AG04449 (cell line): ENCODE measurements at regions of chr17 and their contacts with region 1.

Region 1: DNA sequence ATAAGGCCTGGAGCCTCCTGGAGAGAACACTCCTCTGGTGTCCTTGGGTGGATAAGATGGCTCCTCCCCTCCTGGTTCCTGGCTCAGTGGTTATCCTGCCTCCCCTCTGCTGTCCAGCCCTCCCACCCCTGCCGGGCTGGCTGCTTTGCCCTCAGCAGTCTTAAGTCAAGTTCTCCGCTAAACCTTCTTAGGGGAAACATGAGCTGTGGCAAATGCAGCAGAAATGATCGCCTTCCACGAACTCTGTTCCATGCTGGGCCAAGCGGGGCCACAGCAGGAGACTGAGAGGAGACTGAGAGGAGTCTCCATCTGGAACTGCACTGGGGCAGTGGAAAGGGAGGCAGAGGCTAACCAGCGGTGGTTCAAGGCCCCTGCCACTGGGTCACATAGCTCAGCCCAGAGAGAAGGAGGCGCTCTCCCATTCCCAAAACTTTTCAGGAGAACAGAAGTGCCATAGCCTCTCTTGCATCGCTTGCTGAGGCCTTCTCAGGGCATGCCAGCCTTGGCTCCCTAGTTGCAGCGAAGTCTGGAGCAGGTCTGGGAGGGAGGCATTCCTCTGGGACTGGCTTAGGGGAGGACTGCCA is 26.9 kb downstream of the TNS4 start:
- DNase-seq: no peak
- H3K4me3 ChIP-seq: no peak overlapping the region
- CTCF ChIP-seq: no peak

Region 2: GRCh38 chr17:40399185-40399584 is 75.3 kb before region 1 on chr17:
- CTCF ChIA-PET with region 1: interaction called, 12 read pairs
- POLR2A ChIA-PET with region 1: no interaction called
- DNase-seq: peak; percentile 12
- H3K4me3 ChIP-seq: no peak overlapping the region
- CTCF ChIP-seq: peak; percentile 21

Region 3: GRCh38 chr17:40443583-40444327 is 30.8 kb before region 1 on chr17:
- CTCF ChIA-PET with region 1: interaction called, 85 read pairs
- POLR2A ChIA-PET with region 1: interaction called, 7 read pairs
- DNase-seq: no peak
- H3K4me3 ChIP-seq: peak overlapping the region; percentile 99
- CTCF ChIP-seq: peak; percentile 84

Region 4: GRCh38 chr17:40457964-40458791 is 16.3 kb before region 1 on chr17:
- CTCF ChIA-PET with region 1: interaction called, 85 read pairs
- POLR2A ChIA-PET with region 1: interaction called, 3 read pairs
- DNase-seq: peak; percentile 63
- H3K4me3 ChIP-seq: no peak overlapping the region
- CTCF ChIP-seq: no peak

Region 5: GRCh38 chr17:40490289-40490853 is 15.9 kb after region 1 on chr17:
- CTCF ChIA-PET with region 1: interaction called, 68 read pairs
- POLR2A ChIA-PET with region 1: interaction called, 6 read pairs
- DNase-seq: no peak
- H3K4me3 ChIP-seq: no peak overlapping the region
- CTCF ChIP-seq: no peak

Region 6: DNA sequence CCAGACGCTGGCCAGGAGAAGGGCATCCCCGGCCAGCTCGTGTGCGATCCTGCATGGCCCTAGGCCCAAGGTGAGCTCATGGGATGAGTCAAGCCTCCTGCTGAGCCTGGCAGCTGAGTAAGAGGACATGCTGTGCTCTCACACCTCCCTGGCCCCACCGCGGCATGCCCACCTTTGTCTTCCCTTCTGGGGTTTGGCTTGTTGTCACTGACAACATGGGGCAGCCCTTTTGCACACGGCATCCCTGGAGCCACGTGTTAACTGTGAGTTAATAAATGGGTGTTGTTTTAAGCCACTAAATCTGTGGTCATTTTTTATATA is 35.8 kb after region 1 on chr17:
- CTCF ChIA-PET with region 1: interaction called, 24 read pairs
- POLR2A ChIA-PET with region 1: no interaction called
- DNase-seq: no peak
- H3K4me3 ChIP-seq: no peak overlapping the region
- CTCF ChIP-seq: no peak

Region 7: DNA sequence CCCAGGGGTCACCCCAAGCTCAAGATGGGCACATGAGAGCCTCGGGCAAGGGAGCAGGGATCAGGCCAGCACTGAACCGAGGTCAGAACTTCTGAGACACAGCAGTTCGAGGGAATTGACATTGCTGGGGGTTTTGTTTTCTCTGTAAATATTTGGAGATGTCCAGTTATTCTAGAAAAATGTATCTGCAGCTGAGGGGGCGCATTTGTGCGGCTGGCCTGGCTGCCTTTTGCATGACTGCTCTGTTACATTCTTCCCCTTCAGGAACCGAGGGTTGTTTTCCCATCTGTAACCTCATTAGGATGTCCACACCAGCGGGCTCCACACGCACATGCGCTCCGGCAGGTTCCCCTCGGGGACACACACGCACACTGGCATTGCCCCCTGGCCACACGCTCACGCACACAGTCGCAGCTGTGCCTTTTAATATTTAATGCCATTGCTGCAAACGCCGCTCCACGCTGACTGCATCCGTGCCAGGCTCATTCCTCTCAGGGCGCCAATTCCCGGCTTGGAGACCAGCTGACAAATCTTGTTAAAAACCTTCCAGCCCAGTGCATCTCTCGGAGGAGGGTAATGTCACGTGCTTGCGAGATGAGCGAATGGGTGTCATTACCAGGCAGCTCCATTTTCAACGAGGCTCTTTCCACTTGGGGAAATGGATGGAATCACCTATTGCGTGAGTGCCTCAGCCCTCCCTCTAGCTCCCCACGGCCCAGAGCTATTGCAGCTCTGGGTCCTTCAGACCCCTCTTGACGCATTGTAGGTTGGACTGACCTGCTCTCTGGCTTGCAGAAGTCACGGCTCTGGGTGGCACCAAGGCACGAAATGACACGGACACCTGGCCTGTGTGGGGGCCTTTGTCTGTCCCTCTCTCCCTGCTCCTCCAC is 77.6 kb after region 1 on chr17:
- CTCF ChIA-PET with region 1: interaction called, 17 read pairs
- POLR2A ChIA-PET with region 1: interaction called, 5 read pairs
- DNase-seq: peak; percentile 99
- H3K4me3 ChIP-seq: no peak overlapping the region; the same call in 1 of the 2 replicates
- CTCF ChIP-seq: no peak